ENCODE measurements at regions of chr12 and their contacts with region 1.

Region 1: GRCh38 chr12:108618079-108618952 is 15.4 kb downstream of the SELPLG start:
- DNase-seq: no peak
- ATAC-seq: peak; percentile 73
- H3K4me3 ChIP-seq: no peak overlapping the region
- H3K27ac ChIP-seq: peak overlapping the region; percentile 99
- H3K4me1 ChIP-seq: peaks cover 47% of the 10 kb centered on the region
- H3K27me3 ChIP-seq: no peaks in the 10 kb centered on the region
- CTCF ChIP-seq: peak; percentile 92 to 95 (median 94)
- EP300 ChIP-seq: no peak
- POLR2A ChIP-seq: no peak
- RAD21 ChIP-seq: peak; percentile 96

Region 2: GRCh38 chr12:108442067-108442466 is 176.2 kb before region 1 on chr12:
- CTCF ChIA-PET with region 1: no interaction called
- POLR2A ChIA-PET with region 1: no interaction called
- RAD21 ChIA-PET with region 1: no interaction called
- SMC1A ChIA-PET with region 1: no interaction called
- in situ Hi-C with region 1: no loop called
- intact Hi-C with region 1: no loop called
- DNase-seq: no peak
- ATAC-seq: no peak
- H3K4me3 ChIP-seq: no peak overlapping the region
- H3K27ac ChIP-seq: no peak overlapping the region
- H3K4me1 ChIP-seq: no peaks in the 10 kb centered on the region
- H3K27me3 ChIP-seq: no peaks in the 10 kb centered on the region; a peak in 1 of 4 replicates
- CTCF ChIP-seq: no peak
- EP300 ChIP-seq: no peak
- POLR2A ChIP-seq: no peak
- RAD21 ChIP-seq: no peak

Region 3: DNA sequence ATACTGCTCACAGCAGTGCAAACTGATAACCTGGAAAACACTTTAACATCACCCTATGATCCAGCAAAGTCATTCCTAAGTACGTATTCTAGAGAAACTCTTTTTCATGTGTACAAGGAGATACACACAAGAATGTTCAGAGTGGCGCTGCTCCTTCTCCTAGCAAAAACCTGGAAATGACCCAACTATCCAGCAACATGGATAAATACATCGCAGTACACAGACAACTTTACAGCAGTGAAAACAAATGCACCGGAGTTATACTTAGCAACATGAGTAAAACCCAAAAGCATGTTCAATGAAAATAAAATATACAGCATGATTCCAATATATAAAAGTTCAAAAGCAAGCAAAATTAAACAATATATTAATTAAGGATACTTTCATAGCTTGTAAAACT is 76.0 kb before region 1 on chr12:
- CTCF ChIA-PET with region 1: interaction called, 13 read pairs
- POLR2A ChIA-PET with region 1: interaction called, 6 read pairs
- RAD21 ChIA-PET with region 1: interaction called, 11 read pairs
- SMC1A ChIA-PET with region 1: interaction called, 5 read pairs
- in situ Hi-C with region 1: no loop called
- intact Hi-C with region 1: no loop called
- DNase-seq: no peak
- ATAC-seq: no peak
- H3K4me3 ChIP-seq: no peak overlapping the region
- H3K27ac ChIP-seq: peak overlapping the region; percentile 88; the same call in 1 of the 2 replicates
- H3K4me1 ChIP-seq: peaks cover 23% of the 10 kb centered on the region
- H3K27me3 ChIP-seq: no peaks in the 10 kb centered on the region
- CTCF ChIP-seq: no peak
- EP300 ChIP-seq: no peak
- POLR2A ChIP-seq: no peak
- RAD21 ChIP-seq: no peak

Region 4: DNA sequence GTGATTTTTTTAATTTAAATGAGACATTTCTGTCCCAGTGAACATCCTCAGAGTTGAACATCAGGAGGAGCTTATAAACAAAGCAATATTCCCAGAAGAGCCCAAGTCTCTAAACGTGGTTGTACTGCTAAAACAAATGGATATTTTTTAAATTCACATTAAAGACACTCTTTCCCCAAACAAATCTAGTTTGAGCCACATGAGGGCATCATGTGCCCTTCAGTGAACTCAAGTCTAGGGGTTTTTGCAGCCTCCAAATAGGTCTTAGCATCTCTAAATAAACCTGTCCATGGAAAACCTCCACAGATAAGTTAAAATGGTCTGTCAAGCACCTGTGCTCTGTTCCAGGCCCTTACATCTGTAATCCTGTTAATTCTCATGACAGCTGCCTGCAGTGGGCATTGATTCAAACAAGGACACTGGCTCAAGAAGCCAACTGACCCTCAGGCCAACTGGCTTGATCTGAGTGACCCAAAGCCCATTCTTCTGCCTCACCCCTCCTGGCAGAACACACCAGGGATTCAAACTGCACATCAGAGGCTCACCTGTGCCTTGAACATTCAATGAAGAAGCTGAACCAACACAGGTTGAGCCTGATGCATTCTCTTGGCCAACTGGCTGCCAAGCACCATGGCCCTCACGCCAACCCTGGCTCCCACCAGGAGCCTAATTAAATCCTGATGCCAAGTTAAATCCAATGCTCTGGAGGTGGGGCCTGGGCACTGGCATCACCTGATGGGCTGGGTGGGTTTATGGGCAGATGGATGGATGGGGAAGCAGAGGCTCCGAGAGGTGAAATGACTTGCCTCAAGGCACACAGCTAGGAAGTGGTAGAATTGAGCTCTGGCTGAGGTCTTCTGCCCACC is 47.3 kb before region 1 on chr12:
- CTCF ChIA-PET with region 1: interaction called, 866 read pairs
- POLR2A ChIA-PET with region 1: interaction called, 211 read pairs
- RAD21 ChIA-PET with region 1: interaction called, 633 read pairs
- SMC1A ChIA-PET with region 1: interaction called, 718 read pairs
- in situ Hi-C with region 1: loop called (anchors 5 kb)
- intact Hi-C with region 1: loop called (anchors 1 kb)
- DNase-seq: no peak
- ATAC-seq: no peak
- H3K4me3 ChIP-seq: no peak overlapping the region
- H3K27ac ChIP-seq: peak overlapping the region; percentile 100
- H3K4me1 ChIP-seq: peaks cover 89% of the 10 kb centered on the region
- H3K27me3 ChIP-seq: no peaks in the 10 kb centered on the region
- CTCF ChIP-seq: peak; percentile 42 to 53 (median 49); a peak in 4 of 6 replicates
- EP300 ChIP-seq: 0 out of 4 replicates have a peak, but pooled peaks of 1 of the 2 experiments have one; percentile 10
- POLR2A ChIP-seq: no peak
- RAD21 ChIP-seq: peak; percentile 66

Region 5: GRCh38 chr12:108576660-108577234 is 41.6 kb before region 1 on chr12:
- CTCF ChIA-PET with region 1: interaction called, 866 read pairs
- POLR2A ChIA-PET with region 1: interaction called, 211 read pairs
- RAD21 ChIA-PET with region 1: interaction called, 633 read pairs
- SMC1A ChIA-PET with region 1: interaction called, 718 read pairs
- in situ Hi-C with region 1: no loop called
- intact Hi-C with region 1: loop called (anchors 1 kb)
- DNase-seq: no peak
- ATAC-seq: no peak
- H3K4me3 ChIP-seq: no peak overlapping the region
- H3K27ac ChIP-seq: no peak overlapping the region; the same call in 1 of the 2 replicates
- H3K4me1 ChIP-seq: peaks cover 45% of the 10 kb centered on the region
- H3K27me3 ChIP-seq: no peaks in the 10 kb centered on the region
- CTCF ChIP-seq: no peak
- EP300 ChIP-seq: no peak
- POLR2A ChIP-seq: no peak
- RAD21 ChIP-seq: no peak